Upper lobe of right lung (tissue), 1 donor: ENCODE measurements at regions of chr11 and their contacts with region 1.

Region 1: GRCh38 chr11:78228467-78228866 is 39.7 kb downstream of the USP35 start:
- DNase-seq: no peak
- ATAC-seq: peak; percentile 87
- H3K4me3 ChIP-seq: no peak overlapping the region
- H3K27ac ChIP-seq: no peak overlapping the region
- H3K4me1 ChIP-seq: peaks cover 17% of the 10 kb centered on the region
- H3K27me3 ChIP-seq: no peaks in the 10 kb centered on the region
- CTCF ChIP-seq: peak; percentile 54

Region 2: DNA sequence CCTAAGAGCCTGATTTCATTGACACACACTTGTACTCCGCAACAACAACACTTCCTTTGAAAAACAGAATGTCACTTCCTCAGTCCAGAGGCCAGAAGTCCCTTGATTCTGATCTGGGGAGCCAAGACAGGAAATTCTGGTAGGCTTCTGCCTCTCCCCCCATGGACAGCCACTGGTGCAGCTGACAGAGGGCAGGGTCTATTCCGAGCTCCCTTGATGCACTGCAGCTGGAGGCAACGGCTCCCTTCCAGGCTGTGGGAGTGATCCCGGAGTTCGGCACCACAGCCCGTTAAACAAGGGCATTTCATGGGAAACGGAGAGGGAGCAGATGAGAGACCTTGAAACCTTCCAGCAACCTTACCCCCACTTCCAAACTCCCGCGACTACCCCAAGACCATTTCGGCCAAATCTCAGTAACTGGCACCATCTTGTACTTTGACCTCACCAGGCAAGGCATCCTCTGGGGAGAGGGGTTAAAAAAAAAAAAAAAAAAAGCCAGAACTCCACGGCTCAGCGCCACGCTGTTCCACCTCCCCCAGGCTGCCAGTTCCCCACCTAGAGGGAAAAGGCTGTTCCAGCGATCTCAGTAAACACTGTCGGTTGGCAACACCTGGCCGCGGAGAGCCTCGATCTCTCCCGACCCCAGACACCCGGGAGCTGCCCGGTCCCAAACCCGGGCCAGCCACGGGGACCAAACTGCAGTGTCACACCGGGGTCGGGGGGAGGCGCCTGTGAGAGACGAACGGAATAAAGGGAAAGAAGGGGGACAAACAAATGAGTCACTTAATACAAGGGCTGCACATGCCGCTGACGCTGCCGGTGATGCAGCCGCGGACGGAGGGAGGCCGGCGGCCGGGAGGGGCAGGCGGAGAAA is 188.1 kb after region 1 on chr11:
- intact Hi-C with region 1: loop called (anchors 10 kb)
- DNase-seq: peak; percentile 93
- ATAC-seq: peak; percentile 81
- H3K4me3 ChIP-seq: peak overlapping the region; percentile 78
- H3K27ac ChIP-seq: peak overlapping the region; percentile 96
- H3K4me1 ChIP-seq: peaks cover 44% of the 10 kb centered on the region
- H3K27me3 ChIP-seq: no peaks in the 10 kb centered on the region
- CTCF ChIP-seq: peak; percentile 56

Region 3: DNA sequence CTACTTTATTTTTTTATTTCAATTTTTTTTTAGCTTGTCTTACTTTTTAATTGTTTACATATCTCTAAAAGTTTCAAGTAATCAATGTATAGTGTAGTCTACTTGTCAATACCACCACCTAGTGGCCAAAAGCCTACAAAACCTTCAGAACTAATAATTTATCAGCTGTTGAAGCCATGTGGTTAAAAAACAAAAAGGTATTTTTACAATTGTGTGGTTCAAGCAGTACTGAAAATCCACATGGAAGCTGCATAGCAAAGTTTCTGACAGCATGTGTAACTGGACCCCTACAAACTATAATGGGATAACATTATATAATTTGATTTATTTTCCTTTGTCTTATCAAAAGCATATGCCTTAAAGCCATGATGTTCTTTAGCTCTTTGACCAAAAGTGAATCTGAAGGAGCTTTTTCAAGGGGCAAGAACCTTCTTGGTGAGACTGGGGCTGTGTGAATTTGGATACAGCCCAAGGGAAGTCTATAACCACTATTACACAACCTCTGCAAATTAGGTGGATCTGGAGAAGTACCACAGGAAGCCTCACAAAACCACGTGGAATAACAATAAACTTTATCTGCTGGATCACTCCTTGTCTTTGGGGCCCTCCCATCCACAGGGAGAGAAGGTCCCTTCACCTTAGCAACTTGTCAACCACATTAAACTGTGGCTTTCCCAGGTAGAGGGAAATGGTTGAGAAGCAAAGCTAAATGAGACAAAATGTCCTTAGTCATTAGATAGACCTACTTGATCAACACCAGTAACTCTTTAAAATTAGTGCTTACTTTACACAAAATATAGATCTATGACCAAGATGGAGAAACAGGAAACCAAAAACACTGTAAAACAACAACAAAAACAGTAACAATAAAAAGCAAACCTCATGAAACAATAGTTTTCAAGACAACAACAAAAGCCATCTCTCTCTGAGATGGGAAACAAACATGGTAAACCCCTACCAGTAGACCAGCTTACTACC is 336.3 kb after region 1 on chr11:
- intact Hi-C with region 1: loop called (anchors 10 kb)
- DNase-seq: no peak
- ATAC-seq: peak; percentile 78
- H3K4me3 ChIP-seq: no peak overlapping the region
- H3K27ac ChIP-seq: no peak overlapping the region
- H3K4me1 ChIP-seq: peaks cover 43% of the 10 kb centered on the region
- H3K27me3 ChIP-seq: no peaks in the 10 kb centered on the region
- CTCF ChIP-seq: peak; percentile 77

Region 4: GRCh38 chr11:78659326-78660270 is 431.1 kb after region 1 on chr11:
- intact Hi-C with region 1: no loop called
- DNase-seq: no peak
- ATAC-seq: no peak
- H3K4me3 ChIP-seq: no peak overlapping the region
- H3K27ac ChIP-seq: no peak overlapping the region
- H3K4me1 ChIP-seq: no peaks in the 10 kb centered on the region
- H3K27me3 ChIP-seq: no peaks in the 10 kb centered on the region
- CTCF ChIP-seq: no peak